ENCODE measurements at regions of chr11 and their contacts with region 1.

Region 1: GRCh38 chr11:19071255-19071654 is 10.7 kb upstream of the MRGPRX2 start:
- DNase-seq: peak; percentile 71
- H3K4me3 Mint-ChIP-seq: peak overlapping the region; percentile 57
- H3K27ac Mint-ChIP-seq: no peak overlapping the region
- H3K4me1 Mint-ChIP-seq: peaks cover 2% of the 10 kb centered on the region
- H3K27me3 Mint-ChIP-seq: peaks cover 9% of the 10 kb centered on the region

Region 2: GRCh38 chr11:18802381-18803257 is 268.6 kb before region 1 on chr11:
- CTCF ChIA-PET with region 1: no interaction called
- intact Hi-C with region 1: no loop called
- DNase-seq: peak; percentile 67
- H3K4me3 Mint-ChIP-seq: no peak overlapping the region
- H3K27ac Mint-ChIP-seq: no peak overlapping the region
- H3K4me1 Mint-ChIP-seq: no peaks in the 10 kb centered on the region
- H3K27me3 Mint-ChIP-seq: peaks cover 3% of the 10 kb centered on the region

Region 3: DNA sequence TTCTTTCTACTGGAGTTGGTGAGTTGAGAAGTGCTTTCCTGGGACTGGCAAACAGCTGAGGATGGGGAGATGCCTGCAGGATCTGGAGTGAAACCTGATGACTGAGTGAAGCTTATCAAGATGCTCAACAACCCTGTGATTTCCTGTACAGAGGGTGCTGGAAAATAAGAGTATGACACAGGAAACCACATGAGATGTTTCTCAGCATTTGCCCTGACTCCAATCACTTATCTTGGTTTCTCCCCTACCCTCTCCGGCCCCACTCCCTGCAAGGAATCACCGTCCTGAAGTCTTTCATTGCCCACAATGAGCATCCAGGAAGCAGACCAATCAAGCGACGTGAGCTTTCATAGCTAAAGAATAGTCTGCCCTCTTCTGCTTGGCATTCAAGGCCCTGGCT is 10.6 kb before region 1 on chr11 and contains the start of gene MRGPRX2:
- CTCF ChIA-PET with region 1: interaction called, 18 read pairs
- intact Hi-C with region 1: no loop called
- DNase-seq: peak; percentile 58
- H3K4me3 Mint-ChIP-seq: no peak within 1 kb of the TSS
- H3K27ac Mint-ChIP-seq: no peak within 1 kb of the TSS
- H3K4me1 Mint-ChIP-seq: peaks cover 18% of the 10 kb centered on the region
- H3K27me3 Mint-ChIP-seq: peaks cover 1% of the 10 kb centered on the region
- total RNA-seq, gene MRGPRX2: not detected

Region 4: DNA sequence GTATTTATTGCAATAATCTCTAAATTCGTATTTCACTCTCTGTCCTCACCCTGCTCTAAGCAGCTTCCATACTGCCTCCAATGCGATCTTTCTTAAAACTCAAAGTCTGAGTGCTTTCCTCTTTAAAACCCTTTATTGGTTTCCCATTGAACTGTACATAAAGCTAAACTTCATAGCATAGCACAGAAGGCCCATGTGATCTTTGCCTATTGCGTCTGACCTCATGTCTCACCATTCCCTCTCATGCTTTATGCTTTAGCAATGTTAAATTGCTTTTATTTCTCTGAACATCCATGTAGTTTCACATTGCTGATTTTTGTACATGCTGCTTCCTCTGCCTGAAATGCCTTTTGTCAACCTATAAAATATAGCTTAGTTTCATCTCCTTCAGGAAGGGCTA is 74.1 kb after region 1 on chr11:
- CTCF ChIA-PET with region 1: no interaction called
- intact Hi-C with region 1: no loop called
- DNase-seq: no peak
- H3K4me3 Mint-ChIP-seq: no peak overlapping the region
- H3K27ac Mint-ChIP-seq: no peak overlapping the region
- H3K4me1 Mint-ChIP-seq: no peaks in the 10 kb centered on the region
- H3K27me3 Mint-ChIP-seq: no peaks in the 10 kb centered on the region

Region 5: DNA sequence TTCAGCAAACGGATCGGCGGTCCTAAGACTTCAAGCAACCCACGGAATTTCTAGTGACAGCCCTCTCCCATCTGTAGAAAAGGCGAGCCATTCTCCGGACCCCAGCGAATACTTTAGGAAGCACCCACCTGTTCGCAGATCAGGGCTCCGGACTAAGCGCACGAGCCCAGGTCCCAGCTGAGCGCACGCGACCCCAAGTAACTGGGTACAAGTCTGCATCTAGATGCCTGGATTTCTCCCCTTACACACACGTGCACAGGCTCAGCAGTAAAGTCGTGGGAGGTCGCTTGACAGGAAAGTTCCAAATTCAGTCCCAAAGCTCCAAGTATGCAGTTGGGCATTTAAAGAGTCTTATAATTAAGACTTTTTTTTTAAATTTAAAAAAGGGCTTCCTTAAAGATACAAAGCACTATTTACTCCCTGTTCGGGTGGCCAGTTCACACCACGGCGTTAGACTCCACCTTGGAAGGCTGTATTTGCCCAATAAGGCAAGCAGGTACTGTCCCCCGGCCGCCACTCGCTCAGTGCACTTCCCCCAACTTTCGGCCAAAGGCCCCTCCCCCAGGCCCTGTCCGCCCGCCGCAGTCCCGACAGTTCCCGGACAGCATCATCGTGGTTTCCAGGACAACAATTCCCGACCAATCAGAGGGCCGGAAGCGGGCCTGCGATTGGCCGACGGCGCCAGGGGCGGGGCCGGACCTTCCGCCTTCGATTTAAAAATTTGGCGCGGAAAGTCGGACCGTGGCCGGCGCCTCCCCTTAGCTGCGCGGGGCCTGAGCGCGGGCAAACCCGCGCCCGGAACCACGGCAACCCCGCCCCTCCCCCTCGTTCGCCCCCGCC is 169.4 kb after region 1 on chr11 and contains the start of gene E2F8:
- CTCF ChIA-PET with region 1: interaction called, 5 read pairs
- intact Hi-C with region 1: loop called (anchors 2 kb)
- DNase-seq: peak; percentile 96
- H3K4me3 Mint-ChIP-seq: peak within 1 kb of the TSS; percentile 93
- H3K27ac Mint-ChIP-seq: peak within 1 kb of the TSS; percentile 66
- H3K4me1 Mint-ChIP-seq: peaks cover 15% of the 10 kb centered on the region
- H3K27me3 Mint-ChIP-seq: peaks cover 47% of the 10 kb centered on the region
- total RNA-seq, gene E2F8: 19.5 to 21.2 TPM

Region 6: DNA sequence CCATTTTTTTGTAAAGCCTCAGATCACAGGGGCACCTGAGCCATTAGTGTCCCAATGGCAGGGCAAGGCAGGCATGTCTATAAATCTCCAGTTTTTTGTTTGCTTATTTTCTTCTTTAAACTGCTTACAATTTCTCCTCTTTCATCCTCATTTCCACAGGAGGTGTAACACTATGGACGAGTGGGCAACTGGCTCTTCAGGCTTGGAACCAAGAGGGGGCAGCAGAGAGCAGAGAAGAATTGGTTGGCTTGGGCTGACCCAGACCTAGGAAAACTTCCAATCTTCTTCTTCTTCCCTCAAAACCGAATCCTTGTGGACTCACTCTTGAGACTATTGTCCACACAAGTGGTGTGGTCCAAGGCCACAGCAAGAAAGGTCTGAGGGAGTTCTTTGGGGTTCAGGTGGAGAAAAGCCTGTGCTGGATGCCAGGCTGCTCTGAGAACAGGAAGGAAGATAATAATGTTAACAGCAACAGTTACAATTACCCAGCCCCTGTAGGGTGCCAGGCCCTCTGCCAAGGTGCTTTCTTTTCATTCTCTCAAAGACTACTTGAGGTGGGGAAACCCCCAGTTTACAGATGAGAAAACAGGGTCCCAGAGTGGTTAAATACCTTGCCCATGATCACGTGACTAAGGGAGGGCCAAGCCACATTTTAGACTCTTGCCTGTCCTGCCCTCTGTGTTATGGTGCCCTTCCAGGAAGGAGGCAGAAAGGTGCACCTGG is 240.2 kb after region 1 on chr11:
- CTCF ChIA-PET with region 1: interaction called, 3 read pairs
- intact Hi-C with region 1: loop called (anchors 2 kb)
- DNase-seq: peak; percentile 60
- H3K4me3 Mint-ChIP-seq: no peak overlapping the region
- H3K27ac Mint-ChIP-seq: no peak overlapping the region
- H3K4me1 Mint-ChIP-seq: no peaks in the 10 kb centered on the region
- H3K27me3 Mint-ChIP-seq: no peaks in the 10 kb centered on the region

Region 7: GRCh38 chr11:19450282-19450681 is 379.0 kb after region 1 on chr11:
- CTCF ChIA-PET with region 1: no interaction called
- intact Hi-C with region 1: no loop called
- DNase-seq: no peak
- H3K4me3 Mint-ChIP-seq: no peak overlapping the region
- H3K27ac Mint-ChIP-seq: no peak overlapping the region
- H3K4me1 Mint-ChIP-seq: no peaks in the 10 kb centered on the region
- H3K27me3 Mint-ChIP-seq: peaks cover 3% of the 10 kb centered on the region

Region 8: DNA sequence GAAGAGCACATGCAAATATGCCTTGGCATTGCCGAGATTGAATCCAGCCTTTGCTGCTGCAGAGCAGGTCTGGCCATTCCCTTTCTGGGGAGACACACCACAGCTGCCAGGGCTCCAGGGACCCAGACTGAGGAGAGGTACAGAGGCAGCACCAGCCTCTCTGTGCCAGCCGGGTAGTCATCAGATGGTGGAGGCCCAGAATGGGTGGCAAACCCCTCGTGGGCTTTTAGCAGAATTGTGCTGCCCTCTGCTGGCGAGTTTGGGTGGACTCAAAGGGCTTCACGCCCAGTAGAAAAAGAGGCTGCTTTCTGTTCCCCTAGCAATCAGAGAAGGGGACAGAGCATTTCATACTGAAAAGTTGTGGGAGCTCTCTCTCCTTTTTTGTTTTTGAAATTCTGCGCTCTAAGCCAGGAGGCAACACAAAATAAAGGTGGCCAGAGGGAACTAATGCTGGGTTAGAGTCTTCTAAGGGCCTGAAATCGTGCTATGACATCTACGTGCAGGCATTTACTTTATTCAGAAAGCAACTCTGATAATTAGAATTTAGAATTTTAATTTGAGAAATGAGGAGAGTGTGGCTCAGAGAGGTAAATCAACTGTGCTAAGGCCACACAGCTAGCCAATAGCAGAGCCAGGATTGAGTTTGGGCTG is 482.6 kb after region 1 on chr11:
- CTCF ChIA-PET with region 1: interaction called, 12 read pairs
- intact Hi-C with region 1: loop called (anchors 1 kb)
- DNase-seq: peak; percentile 89
- H3K4me3 Mint-ChIP-seq: no peak overlapping the region
- H3K27ac Mint-ChIP-seq: no peak overlapping the region
- H3K4me1 Mint-ChIP-seq: no peaks in the 10 kb centered on the region
- H3K27me3 Mint-ChIP-seq: peaks cover 8% of the 10 kb centered on the region

Region 9: DNA sequence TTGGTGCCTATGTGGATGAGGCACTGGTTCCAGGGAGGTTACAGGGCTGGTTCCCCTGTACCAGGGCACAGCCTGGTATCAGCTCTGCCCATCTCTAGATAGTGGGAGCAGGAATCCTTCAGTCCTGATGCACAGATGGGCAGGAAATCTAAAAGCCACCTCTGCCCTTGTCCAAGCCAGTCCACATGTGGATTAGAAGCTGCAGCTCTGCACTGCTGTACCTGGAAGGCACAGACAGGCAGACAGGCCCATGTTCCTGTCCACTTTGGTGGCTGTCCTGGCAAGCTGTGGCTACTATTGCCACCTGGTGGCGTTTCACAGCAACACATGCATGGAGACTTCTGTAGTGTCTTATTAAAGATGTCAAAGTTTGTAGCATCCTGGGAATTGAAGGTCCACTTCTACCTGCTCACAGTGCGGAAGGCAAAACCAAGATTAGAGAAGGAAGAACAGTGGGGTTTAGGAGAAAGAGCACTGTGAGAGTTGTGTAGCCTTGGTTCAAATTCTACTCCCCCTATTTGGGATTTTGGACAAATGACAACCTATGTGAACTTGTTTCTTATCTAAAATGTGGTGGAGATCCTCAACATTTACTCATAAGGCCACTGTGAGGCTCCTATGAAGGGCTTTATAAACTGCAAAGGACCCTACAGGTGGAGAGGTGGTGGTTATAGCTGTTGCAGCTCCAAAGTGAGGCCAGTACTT is 671.5 kb after region 1 on chr11:
- CTCF ChIA-PET with region 1: no interaction called
- intact Hi-C with region 1: loop called (anchors 2 kb)
- DNase-seq: peak; percentile 81
- H3K4me3 Mint-ChIP-seq: no peak overlapping the region
- H3K27ac Mint-ChIP-seq: no peak overlapping the region
- H3K4me1 Mint-ChIP-seq: no peaks in the 10 kb centered on the region
- H3K27me3 Mint-ChIP-seq: peaks cover 2% of the 10 kb centered on the region

Region 10: GRCh38 chr11:19903620-19904069 is 832.4 kb after region 1 on chr11:
- CTCF ChIA-PET with region 1: interaction called, 3 read pairs
- intact Hi-C with region 1: loop called (anchors 5 kb)
- DNase-seq: peak; percentile 76
- H3K4me3 Mint-ChIP-seq: no peak overlapping the region
- H3K27ac Mint-ChIP-seq: no peak overlapping the region
- H3K4me1 Mint-ChIP-seq: no peaks in the 10 kb centered on the region
- H3K27me3 Mint-ChIP-seq: no peaks in the 10 kb centered on the region

Measured in activated naive CD4-positive, alpha-beta T cell treated with anti-CD3 and anti-CD28 coated beads for 36 hours (primary cell).